Mammary epithelial cell (primary cell): ENCODE measurements at regions of chr17 and their contacts with region 1.

Region 1: GRCh38 chr17:61279476-61280143 is 120.0 kb upstream of the TBX2 start:
- DNase-seq: no peak
- H3K4me3 ChIP-seq: no peak overlapping the region
- H3K27ac ChIP-seq: no peak overlapping the region
- H3K4me1 ChIP-seq: no peaks in the 10 kb centered on the region
- H3K27me3 ChIP-seq: no peaks in the 10 kb centered on the region
- CTCF ChIP-seq: no peak

Region 2: DNA sequence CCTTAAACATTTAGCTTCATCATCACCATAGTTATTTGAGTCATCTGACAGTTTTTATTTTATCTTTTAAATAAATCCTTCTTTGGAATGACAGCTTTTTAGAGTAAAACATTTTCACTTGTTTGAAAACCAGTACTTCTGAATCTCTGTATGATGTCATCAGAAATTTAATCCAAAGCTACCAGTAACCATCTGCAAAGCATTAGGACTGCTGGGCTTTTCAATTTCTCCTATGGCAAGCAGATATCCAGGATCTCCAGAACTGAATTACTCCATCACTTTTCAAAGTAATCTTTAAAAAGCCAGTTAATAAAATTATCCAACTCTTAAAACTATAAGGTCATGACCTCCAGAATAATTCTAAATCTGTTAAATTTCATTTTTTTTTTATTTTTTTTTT is 805.8 kb before region 1 on chr17:
- CTCF ChIA-PET with region 1: interaction called, 13 read pairs
- dilution Hi-C with region 1: no loop called
- in situ Hi-C with region 1: no loop called
- intact Hi-C with region 1: no loop called
- DNase-seq: no peak
- H3K4me3 ChIP-seq: no peak overlapping the region
- H3K27ac ChIP-seq: no peak overlapping the region
- H3K4me1 ChIP-seq: peaks cover 5% of the 10 kb centered on the region
- H3K27me3 ChIP-seq: no peaks in the 10 kb centered on the region
- CTCF ChIP-seq: no peak

Region 3: DNA sequence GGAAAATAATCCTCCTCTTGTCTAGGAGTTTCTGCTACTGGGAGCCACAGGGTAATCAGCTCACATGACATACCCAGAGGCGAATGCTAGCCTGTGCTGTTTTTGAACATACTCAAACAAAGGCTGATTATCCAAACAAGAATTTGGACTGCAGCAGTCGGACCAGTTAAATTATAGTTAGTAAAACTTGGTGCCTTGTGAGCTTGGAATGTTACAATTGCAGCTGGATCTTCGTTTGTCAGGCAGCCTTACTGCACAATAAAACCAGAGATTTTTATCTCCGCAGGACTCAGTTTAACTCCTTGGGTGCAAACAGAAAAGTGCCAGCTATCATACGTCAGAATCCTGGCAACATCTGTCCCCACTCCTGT is 43.8 kb before region 1 on chr17:
- CTCF ChIA-PET with region 1: no interaction called
- dilution Hi-C with region 1: no loop called
- in situ Hi-C with region 1: no loop called
- intact Hi-C with region 1: no loop called
- DNase-seq: peak; percentile 38
- H3K4me3 ChIP-seq: no peak overlapping the region
- H3K27ac ChIP-seq: no peak overlapping the region
- H3K4me1 ChIP-seq: no peaks in the 10 kb centered on the region
- H3K27me3 ChIP-seq: no peaks in the 10 kb centered on the region
- CTCF ChIP-seq: no peak

Region 4: DNA sequence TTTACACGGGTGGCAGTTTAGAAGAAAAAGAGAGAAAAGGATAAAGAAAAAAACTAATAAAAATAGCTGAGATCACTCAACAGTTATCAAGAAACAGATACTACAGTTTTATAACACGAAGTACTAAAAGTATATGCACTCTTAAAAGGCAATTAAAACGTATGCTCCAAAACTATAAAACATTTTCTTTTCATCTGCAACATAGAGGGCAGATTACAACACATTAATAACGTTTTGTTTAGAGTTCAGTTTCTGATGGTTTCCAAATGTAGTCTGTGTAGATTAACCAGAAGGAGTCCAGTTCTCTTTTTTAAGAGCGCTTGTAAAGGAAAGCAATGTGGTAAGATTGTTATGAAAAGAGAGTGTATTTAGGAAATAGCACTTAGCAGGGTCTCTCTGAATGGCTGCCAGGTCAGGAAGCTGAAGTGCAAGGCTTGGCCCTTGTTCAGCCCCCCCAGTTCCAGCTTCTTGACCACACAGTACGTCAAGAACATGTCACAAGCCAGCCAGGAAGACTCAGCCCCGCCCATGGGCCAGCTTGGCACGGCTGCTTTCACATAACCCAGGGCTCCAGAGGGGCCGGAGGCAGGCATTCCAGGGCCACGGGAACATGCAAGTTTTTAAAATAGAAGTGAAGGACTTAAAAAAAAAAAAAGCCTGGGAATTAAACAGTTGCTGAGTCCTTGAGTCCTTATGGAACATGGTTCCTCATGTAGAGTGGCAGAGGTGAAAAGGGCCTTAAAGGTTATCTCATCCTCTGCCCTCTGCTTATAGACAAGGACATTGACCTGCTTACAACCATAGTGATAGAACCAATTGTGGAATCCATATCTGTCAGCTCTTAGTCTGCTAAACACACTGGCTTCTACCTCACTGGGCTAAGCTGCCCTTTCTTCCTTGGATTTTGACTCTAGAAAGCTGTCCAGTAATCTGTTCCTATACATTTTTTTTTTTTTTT is 27.4 kb before region 1 on chr17:
- CTCF ChIA-PET with region 1: no interaction called
- dilution Hi-C with region 1: no loop called
- in situ Hi-C with region 1: no loop called
- intact Hi-C with region 1: no loop called
- DNase-seq: no peak
- H3K4me3 ChIP-seq: no peak overlapping the region
- H3K27ac ChIP-seq: no peak overlapping the region
- H3K4me1 ChIP-seq: no peaks in the 10 kb centered on the region
- H3K27me3 ChIP-seq: no peaks in the 10 kb centered on the region
- CTCF ChIP-seq: no peak

Region 5: DNA sequence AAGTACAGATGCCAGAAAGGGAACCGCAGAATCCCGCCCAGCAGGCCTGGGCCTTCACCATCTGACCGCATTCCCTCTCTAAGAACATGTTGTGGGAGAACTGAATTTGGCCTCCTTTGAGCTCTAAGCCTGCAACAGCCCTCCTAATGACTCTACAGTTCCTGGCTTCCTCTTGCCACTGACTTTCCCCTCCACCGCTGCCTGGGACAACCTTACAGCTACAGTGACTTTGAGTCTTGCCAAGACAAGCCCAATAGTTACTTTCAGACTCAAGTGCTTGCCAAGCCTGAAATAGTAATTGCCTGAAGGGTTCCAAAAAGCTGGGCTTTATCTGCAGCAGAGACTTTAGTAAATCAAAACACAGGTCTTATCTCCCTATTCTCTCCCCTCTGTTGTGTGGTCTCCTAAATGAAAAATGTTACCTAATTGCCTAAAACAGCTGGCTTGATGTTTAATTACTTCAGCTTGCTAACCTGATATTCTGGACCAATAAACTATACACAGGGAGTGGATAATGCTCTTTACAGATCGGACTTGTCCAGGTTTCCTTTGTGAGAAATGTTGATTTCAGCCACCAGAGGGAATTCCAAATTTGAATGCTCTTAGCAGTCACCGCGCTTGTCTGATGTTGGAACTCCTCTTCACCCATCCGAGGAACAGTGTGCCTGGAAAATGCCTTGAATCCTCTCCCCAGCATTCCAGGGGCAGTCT is 34.9 kb after region 1 on chr17:
- CTCF ChIA-PET with region 1: no interaction called
- dilution Hi-C with region 1: no loop called
- in situ Hi-C with region 1: no loop called
- intact Hi-C with region 1: loop called (anchors 5 kb)
- DNase-seq: peak; percentile 77
- H3K4me3 ChIP-seq: no peak overlapping the region
- H3K27ac ChIP-seq: no peak overlapping the region
- H3K4me1 ChIP-seq: peaks cover 18% of the 10 kb centered on the region
- H3K27me3 ChIP-seq: peaks cover 3% of the 10 kb centered on the region
- CTCF ChIP-seq: peak in 1 of 2 donors; percentile 8

Region 6: DNA sequence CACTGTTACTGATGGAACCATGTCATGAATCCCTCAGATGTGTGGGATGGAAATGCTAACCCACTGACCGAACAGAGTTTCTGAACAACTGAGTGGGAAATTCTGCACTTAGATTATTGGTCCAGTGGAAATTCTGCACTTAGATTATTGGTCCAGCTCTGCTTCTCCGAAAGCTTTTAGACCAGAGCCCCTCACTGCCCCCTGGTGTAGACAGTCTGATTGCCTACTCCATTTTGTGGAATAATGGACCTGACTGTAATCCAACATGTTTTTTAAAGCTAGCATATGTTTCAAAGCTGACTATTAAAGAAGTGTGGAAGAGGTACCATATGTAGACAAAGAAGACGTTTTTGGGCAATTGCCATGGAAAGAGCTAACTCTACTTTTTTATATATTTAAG is 69.7 kb after region 1 on chr17:
- CTCF ChIA-PET with region 1: no interaction called
- dilution Hi-C with region 1: loop called (anchors 5 kb)
- in situ Hi-C with region 1: no loop called
- intact Hi-C with region 1: no loop called
- DNase-seq: no peak
- H3K4me3 ChIP-seq: no peak overlapping the region
- H3K27ac ChIP-seq: no peak overlapping the region
- H3K4me1 ChIP-seq: no peaks in the 10 kb centered on the region
- H3K27me3 ChIP-seq: peaks cover 3% of the 10 kb centered on the region
- CTCF ChIP-seq: no peak